Activated CD8-positive, alpha-beta T cell treated with anti-CD3 and anti-CD28 coated beads, Interleukin-2, amount 10 ng/mL, durations not matched to agents 7 days and 5 days (primary cell): ENCODE measurements at regions of chr1 and their contacts with region 1.

Region 1: GRCh38 chr1:11907275-11908094 is 18.7 kb downstream of the KIAA2013 start:
- DNase-seq: peak; percentile 94
- ATAC-seq: peak; percentile 47
- H3K4me3 Mint-ChIP-seq: peak overlapping the region; percentile 81
- H3K27ac Mint-ChIP-seq: peak overlapping the region; percentile 100
- H3K4me1 Mint-ChIP-seq: peaks cover 56% of the 10 kb centered on the region
- H3K27me3 Mint-ChIP-seq: peaks cover 5% of the 10 kb centered on the region

Region 2: DNA sequence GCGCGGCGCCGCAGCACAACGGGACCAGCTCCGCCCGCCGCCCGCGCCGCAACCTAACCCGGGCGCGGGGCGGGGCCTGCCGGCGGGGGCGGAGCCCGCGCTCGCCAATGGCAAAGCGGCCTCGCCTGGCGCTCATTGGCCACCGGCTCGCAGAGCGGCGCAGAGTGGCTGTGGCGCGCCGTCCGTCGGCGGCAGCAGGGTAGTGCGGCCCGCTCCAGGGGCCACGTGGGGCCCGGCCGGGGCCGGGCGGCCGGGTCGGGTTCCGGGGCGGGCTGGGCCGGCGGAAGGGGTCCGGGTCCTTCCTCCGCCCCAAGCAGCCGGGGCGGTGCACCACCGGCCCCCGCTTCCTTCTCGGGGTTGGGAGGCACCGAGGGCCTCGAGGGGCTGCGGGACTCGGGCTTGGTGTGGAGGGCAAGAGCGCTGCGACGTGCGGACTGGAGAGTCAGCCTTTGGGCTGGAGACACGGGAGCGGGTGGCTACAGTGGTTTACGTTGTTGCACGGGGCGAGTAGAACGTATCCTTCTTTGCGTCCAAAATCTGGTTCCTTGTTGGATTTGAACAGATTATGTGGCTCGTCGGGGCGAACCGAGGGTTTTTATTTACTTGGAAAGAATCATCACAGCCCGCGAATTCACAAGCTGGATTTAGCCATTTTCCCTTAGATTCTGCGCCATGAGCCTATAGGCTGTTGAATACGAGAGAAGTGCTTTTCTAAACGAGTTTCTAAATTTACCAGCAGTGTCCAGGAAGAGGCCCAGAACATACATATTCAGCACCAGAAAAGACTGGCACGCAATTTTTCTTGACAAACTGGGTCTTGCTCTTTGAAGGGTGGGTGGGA is 847.3 kb before region 1 on chr1 and contains the start of gene SRM:
- CTCF ChIA-PET with region 1: no interaction called
- POLR2A ChIA-PET with region 1: interaction called, 10 read pairs
- DNase-seq: peak; percentile 91
- ATAC-seq: peak; percentile 94
- H3K4me3 Mint-ChIP-seq: peak within 1 kb of the TSS; percentile 96
- H3K27ac Mint-ChIP-seq: peak within 1 kb of the TSS; percentile 98
- H3K4me1 Mint-ChIP-seq: peaks cover 54% of the 10 kb centered on the region
- H3K27me3 Mint-ChIP-seq: no peaks in the 10 kb centered on the region
- total RNA-seq, gene SRM: 146 to 154 TPM

Region 3: GRCh38 chr1:11735854-11736745 is 171.4 kb before region 1 on chr1 and contains the start of gene AGTRAP:
- CTCF ChIA-PET with region 1: no interaction called
- POLR2A ChIA-PET with region 1: interaction called, 32 read pairs
- DNase-seq: peak; percentile 94
- ATAC-seq: peak; percentile 81
- H3K4me3 Mint-ChIP-seq: peak within 1 kb of the TSS; percentile 98
- H3K27ac Mint-ChIP-seq: peak within 1 kb of the TSS; percentile 91
- H3K4me1 Mint-ChIP-seq: peaks cover 74% of the 10 kb centered on the region
- H3K27me3 Mint-ChIP-seq: no peaks in the 10 kb centered on the region
- total RNA-seq, gene AGTRAP: 82.5 to 84.2 TPM

Region 4: GRCh38 chr1:11874258-11874562 is 33.3 kb before region 1 on chr1:
- CTCF ChIA-PET with region 1: no interaction called
- POLR2A ChIA-PET with region 1: interaction called, 28 read pairs
- DNase-seq: no peak
- ATAC-seq: no peak
- H3K4me3 Mint-ChIP-seq: no peak overlapping the region
- H3K27ac Mint-ChIP-seq: no peak overlapping the region
- H3K4me1 Mint-ChIP-seq: no peaks in the 10 kb centered on the region
- H3K27me3 Mint-ChIP-seq: peaks cover 7% of the 10 kb centered on the region

Region 5: GRCh38 chr1:11948822-11949458 is 41.5 kb after region 1 on chr1:
- CTCF ChIA-PET with region 1: no interaction called
- POLR2A ChIA-PET with region 1: interaction called, 28 read pairs
- DNase-seq: no peak
- ATAC-seq: no peak
- H3K4me3 Mint-ChIP-seq: no peak overlapping the region
- H3K27ac Mint-ChIP-seq: peak overlapping the region; percentile 34
- H3K4me1 Mint-ChIP-seq: peaks cover 2% of the 10 kb centered on the region
- H3K27me3 Mint-ChIP-seq: no peaks in the 10 kb centered on the region

Region 6: GRCh38 chr1:12040457-12041051 is 133.1 kb after region 1 on chr1:
- CTCF ChIA-PET with region 1: no interaction called
- POLR2A ChIA-PET with region 1: interaction called, 52 read pairs
- DNase-seq: no peak
- ATAC-seq: no peak
- H3K4me3 Mint-ChIP-seq: no peak overlapping the region
- H3K27ac Mint-ChIP-seq: no peak overlapping the region
- H3K4me1 Mint-ChIP-seq: peaks cover 9% of the 10 kb centered on the region
- H3K27me3 Mint-ChIP-seq: peaks cover 10% of the 10 kb centered on the region

Region 7: DNA sequence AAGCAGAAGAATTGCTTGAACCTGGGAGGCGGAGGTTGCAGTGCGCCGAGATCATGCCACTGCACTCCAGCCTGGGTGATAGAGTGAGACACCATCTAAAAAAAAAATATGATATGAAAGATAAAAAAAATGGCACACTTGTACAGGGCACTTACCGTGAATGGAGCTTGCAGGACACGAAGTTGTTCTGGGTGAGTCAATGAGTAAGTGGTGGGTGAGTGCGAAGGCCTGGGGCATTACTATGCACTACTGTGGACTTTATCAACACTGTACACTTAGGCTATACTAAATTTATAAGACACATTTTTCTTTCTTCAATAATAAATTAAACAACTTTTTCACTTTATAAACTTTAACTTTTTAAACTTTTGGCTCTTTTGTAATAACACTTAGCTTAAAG is 192.6 kb after region 1 on chr1:
- CTCF ChIA-PET with region 1: no interaction called
- POLR2A ChIA-PET with region 1: interaction called, 10 read pairs
- DNase-seq: no peak
- ATAC-seq: no peak
- H3K4me3 Mint-ChIP-seq: no peak overlapping the region
- H3K27ac Mint-ChIP-seq: no peak overlapping the region
- H3K4me1 Mint-ChIP-seq: peaks cover 8% of the 10 kb centered on the region
- H3K27me3 Mint-ChIP-seq: no peaks in the 10 kb centered on the region

Region 8: DNA sequence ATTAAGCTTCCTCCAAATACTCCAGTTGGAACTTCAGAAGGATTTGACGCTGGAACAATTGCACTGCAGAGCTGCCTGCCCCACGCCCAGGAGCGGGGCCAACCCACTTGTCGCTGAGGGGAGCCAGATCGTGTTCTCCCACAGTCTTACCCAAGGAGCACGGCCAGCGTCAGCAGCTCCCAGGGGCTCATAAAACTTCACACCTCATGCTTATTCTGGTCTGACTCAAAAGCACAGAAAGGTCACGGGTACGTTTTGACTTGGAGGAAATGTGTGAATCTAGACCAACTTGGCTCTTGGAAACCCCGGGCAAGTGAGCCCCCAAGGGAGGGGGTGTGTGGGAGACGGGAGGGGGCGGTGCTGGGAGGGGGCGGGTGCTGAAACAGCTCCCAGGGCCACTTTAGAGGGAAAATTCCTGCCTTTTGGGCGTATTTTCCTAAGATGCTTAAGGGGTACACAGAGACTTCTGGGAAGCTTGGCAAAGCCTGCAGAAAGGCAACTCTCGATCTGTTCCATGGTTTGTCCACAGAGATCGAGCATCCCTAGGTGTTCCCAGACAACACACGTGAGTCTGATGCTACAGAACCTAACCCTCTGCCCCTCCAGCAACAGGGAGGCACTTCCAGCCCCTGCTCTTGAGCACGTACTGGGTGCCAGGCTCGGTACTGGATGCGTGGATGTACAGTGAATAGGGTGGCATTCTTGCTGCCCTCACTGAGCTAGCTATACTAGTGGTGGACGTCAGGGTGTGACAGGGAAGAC is 611.6 kb after region 1 on chr1:
- CTCF ChIA-PET with region 1: no interaction called
- POLR2A ChIA-PET with region 1: no interaction called
- DNase-seq: no peak
- ATAC-seq: no peak
- H3K4me3 Mint-ChIP-seq: no peak overlapping the region
- H3K27ac Mint-ChIP-seq: no peak overlapping the region
- H3K4me1 Mint-ChIP-seq: peaks cover 11% of the 10 kb centered on the region
- H3K27me3 Mint-ChIP-seq: no peaks in the 10 kb centered on the region